BJ (cell line): ENCODE measurements at regions of chr19 and their contacts with region 1.

Region 1: DNA sequence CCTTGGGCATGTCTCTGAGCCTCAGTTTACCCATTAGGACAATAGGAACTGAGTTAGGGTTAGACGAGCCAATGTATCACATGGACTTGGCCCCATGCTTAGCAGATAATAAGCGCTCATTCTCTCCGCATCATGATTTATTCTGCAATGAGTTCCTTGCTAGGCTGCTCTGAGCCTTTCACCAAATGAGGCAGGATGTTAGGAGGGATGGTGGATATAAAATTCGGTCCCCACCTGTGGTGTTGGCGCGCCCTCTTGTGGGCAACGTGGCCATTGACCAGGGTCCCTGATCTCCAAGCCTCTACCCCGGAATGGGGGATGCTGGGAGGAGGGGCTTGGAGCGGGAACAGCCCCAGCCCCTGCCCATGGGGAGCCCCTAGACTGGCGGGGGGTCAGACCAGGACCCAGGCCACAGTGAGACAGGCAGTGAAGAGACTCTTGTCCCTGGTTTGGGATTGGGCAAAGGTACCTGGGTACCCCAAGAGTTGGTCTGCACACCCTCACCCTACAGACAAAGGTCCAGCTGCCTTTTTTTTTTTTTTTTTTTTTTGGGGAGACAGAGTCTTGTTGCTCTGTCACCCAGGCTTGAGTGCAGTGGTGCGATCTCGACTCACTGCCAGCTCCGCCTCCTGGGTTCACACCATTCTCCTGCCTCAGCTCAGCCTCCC is 43.9 kb downstream of the CERS4 start:
- DNase-seq: no peak
- H3K4me3 ChIP-seq: no peak overlapping the region
- H3K27me3 ChIP-seq: no peaks in the 10 kb centered on the region
- CTCF ChIP-seq: peak; percentile 91

Region 2: GRCh38 chr19:8158411-8159074 is 94.5 kb before region 1 on chr19:
- CTCF ChIA-PET with region 1: interaction called, 13 read pairs
- POLR2A ChIA-PET with region 1: no interaction called
- DNase-seq: no peak
- H3K4me3 ChIP-seq: no peak overlapping the region
- H3K27me3 ChIP-seq: no peaks in the 10 kb centered on the region
- CTCF ChIP-seq: peak; percentile 63

Region 3: GRCh38 chr19:8240274-8241229 is 12.5 kb before region 1 on chr19:
- CTCF ChIA-PET with region 1: interaction called, 34 read pairs
- POLR2A ChIA-PET with region 1: no interaction called
- DNase-seq: peak; percentile 47
- H3K4me3 ChIP-seq: no peak overlapping the region
- H3K27me3 ChIP-seq: no peaks in the 10 kb centered on the region
- CTCF ChIP-seq: no peak

Region 4: GRCh38 chr19:8334458-8335342 is 81.6 kb after region 1 on chr19:
- CTCF ChIA-PET with region 1: no interaction called
- POLR2A ChIA-PET with region 1: no interaction called
- DNase-seq: no peak
- H3K4me3 ChIP-seq: no peak overlapping the region
- H3K27me3 ChIP-seq: peaks cover 29% of the 10 kb centered on the region
- CTCF ChIP-seq: no peak

Region 5: DNA sequence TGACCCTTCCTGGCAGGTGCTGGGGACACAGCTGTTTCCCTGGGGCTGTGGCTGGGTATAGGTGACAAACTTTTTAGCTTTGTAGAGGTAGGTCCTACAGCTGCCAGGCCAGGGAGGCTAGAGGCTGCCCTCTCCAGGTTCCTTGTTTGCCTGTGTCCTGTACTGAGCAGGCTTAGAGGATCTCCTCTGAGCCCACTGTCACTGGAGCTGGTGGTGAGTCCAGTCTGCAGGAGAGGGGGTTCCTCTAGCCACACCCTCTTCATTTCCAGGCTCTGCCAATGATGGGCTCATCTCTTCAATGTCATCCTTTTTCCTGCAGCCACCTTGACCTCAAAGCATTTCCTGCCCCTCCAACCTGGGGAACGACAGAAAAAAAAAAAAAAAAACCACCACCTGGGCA is 124.5 kb after region 1 on chr19:
- CTCF ChIA-PET with region 1: no interaction called
- POLR2A ChIA-PET with region 1: no interaction called
- DNase-seq: no peak
- H3K4me3 ChIP-seq: no peak overlapping the region
- H3K27me3 ChIP-seq: no peaks in the 10 kb centered on the region
- CTCF ChIP-seq: no peak